ENCODE measurements at regions of chr2 and their contacts with region 1.

Region 1: DNA sequence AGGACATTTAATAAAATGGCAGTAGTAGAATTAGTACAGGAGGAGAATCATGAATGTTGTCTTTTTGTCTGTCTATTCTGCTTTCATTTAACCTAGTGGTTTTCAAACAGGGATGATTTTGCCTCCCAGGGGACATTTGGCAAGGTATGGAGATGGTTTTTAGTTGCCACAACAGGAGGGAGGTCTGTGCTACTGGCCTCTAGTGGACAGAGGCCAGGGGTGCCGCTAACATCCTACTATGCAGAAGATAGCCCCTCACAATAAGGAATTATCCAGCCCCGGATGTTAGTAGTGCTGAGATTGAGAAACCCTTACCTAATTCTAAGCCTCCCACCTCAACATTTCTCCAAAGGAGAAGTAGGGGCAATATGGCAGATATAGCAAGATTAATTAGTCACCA is 18.3 kb downstream of the FASTKD2 start:
- DNase-seq: no peak
- H3K4me3 ChIP-seq: no peak overlapping the region
- H3K4me3 Mint-ChIP-seq: no peak overlapping the region
- H3K27ac ChIP-seq: no peak overlapping the region
- H3K27ac Mint-ChIP-seq: peak overlapping the region in 1 of 7 donors; percentile 39
- H3K4me1 ChIP-seq: no peaks in the 10 kb centered on the region
- H3K4me1 Mint-ChIP-seq: no peaks in the 10 kb centered on the region
- H3K27me3 ChIP-seq: no peaks in the 10 kb centered on the region
- H3K27me3 Mint-ChIP-seq: no peaks in the 10 kb centered on the region
- CTCF ChIP-seq: peak; percentile 42

Region 2: GRCh38 chr2:206693399-206694137 is 90.2 kb before region 1 on chr2:
- intact Hi-C with region 1: loop called (anchors 2 to 5 kb)
- DNase-seq: peak; percentile 16 to 53 (median 49)
- H3K4me3 ChIP-seq: no peak overlapping the region
- H3K4me3 Mint-ChIP-seq: no peak overlapping the region
- H3K27ac ChIP-seq: no peak overlapping the region
- H3K27ac Mint-ChIP-seq: no peak overlapping the region
- H3K4me1 ChIP-seq: no peaks in the 10 kb centered on the region
- H3K4me1 Mint-ChIP-seq: peaks cover 1% of the 10 kb centered on the region
- H3K27me3 ChIP-seq: no peaks in the 10 kb centered on the region
- H3K27me3 Mint-ChIP-seq: no peaks in the 10 kb centered on the region
- CTCF ChIP-seq: peak; percentile 74